ENCODE measurements at regions of chr3 and their contacts with region 1.

Region 1: GRCh38 chr3:102163036-102163827 is 271.6 kb upstream of the ZPLD1 start:
- DNase-seq: peak; percentile 31
- H3K4me3 Mint-ChIP-seq: no peak overlapping the region
- H3K27ac Mint-ChIP-seq: peak overlapping the region; percentile 6
- H3K4me1 Mint-ChIP-seq: peaks cover 25% of the 10 kb centered on the region
- H3K27me3 Mint-ChIP-seq: no peaks in the 10 kb centered on the region

Region 2: GRCh38 chr3:101791778-101792177 is 371.5 kb before region 1 on chr3:
- CTCF ChIA-PET with region 1: no interaction called
- intact Hi-C with region 1: no loop called
- DNase-seq: no peak
- H3K4me3 Mint-ChIP-seq: no peak overlapping the region
- H3K27ac Mint-ChIP-seq: peak overlapping the region; percentile 32
- H3K4me1 Mint-ChIP-seq: peaks cover 62% of the 10 kb centered on the region
- H3K27me3 Mint-ChIP-seq: no peaks in the 10 kb centered on the region

Region 3: DNA sequence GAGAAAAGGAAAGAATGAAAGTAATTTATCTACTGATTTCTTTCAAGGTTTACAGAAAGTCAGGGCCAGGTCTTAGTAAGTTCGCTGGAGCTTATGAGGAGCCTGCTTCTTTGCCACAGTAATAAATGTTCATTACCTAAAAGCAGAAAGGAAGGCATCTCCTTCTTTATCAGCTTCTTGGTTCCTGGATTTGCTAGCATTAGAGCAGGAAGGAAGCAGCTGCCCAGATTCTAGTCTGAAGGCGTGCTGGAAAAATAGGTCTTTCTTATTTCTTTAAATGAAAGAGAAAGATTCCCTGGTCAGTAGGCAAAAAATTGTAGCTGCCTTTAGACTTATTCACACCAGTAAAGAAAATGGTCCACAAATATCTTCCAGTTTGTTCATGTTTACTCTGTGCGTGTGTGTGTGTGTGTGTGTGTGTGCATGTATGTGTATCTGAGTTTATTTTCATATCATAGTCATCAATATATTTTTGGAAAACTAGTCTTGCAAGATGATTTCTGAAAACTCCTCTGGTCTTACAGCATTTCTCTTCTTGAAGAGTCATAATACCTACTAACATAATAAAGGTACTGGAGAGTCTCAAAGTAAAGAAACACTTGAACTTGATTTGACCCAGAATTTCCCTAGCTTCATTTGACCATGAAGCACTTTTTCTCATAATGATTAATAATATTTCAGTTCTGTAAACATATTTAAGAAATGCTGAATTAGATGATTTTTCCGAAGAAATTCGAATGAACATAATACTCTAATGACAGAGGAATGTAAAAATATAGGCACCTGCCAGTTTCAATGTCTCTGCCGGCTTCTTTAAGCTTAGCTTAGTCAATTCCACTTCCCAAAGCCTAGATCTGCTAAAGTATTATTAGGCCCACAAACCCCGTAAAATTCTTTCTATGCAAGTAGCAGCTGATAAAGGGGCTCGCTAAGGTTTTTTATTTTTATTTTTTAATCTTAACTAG is 16.4 kb after region 1 on chr3:
- CTCF ChIA-PET with region 1: interaction called, 9 read pairs
- intact Hi-C with region 1: loop called (anchors 2 kb)
- DNase-seq: no peak
- H3K4me3 Mint-ChIP-seq: no peak overlapping the region
- H3K27ac Mint-ChIP-seq: peak overlapping the region; percentile 39
- H3K4me1 Mint-ChIP-seq: peaks cover 6% of the 10 kb centered on the region
- H3K27me3 Mint-ChIP-seq: no peaks in the 10 kb centered on the region

Region 4: GRCh38 chr3:102189956-102190723 is 26.9 kb after region 1 on chr3:
- CTCF ChIA-PET with region 1: no interaction called
- intact Hi-C with region 1: loop called (anchors 2 kb)
- DNase-seq: no peak
- H3K4me3 Mint-ChIP-seq: no peak overlapping the region
- H3K27ac Mint-ChIP-seq: no peak overlapping the region
- H3K4me1 Mint-ChIP-seq: peaks cover 16% of the 10 kb centered on the region
- H3K27me3 Mint-ChIP-seq: no peaks in the 10 kb centered on the region

Measured in activated naive CD4-positive, alpha-beta T cell treated with anti-CD3 and anti-CD28 coated beads for 36 hours (primary cell).